GM12878 (cell line): ENCODE measurements at regions of chr4 and their contacts with region 1.

Region 1: GRCh38 chr4:105594099-105594993 is 41.9 kb downstream of the ARHGEF38 start:
- DNase-seq: peak; percentile 59
- ATAC-seq: peak; percentile 95
- H3K4me3 ChIP-seq: peak overlapping the region; percentile 47
- H3K27ac ChIP-seq: peak overlapping the region; percentile 77
- H3K4me1 ChIP-seq: no peaks in the 10 kb centered on the region; the same call in 1 of the 2 replicates
- H3K27me3 ChIP-seq: no peaks in the 10 kb centered on the region
- CTCF ChIP-seq: no peak
- EP300 ChIP-seq: peak; percentile 85 to 92
- POLR2A ChIP-seq: no peak
- RAD21 ChIP-seq: no peak

Region 2: DNA sequence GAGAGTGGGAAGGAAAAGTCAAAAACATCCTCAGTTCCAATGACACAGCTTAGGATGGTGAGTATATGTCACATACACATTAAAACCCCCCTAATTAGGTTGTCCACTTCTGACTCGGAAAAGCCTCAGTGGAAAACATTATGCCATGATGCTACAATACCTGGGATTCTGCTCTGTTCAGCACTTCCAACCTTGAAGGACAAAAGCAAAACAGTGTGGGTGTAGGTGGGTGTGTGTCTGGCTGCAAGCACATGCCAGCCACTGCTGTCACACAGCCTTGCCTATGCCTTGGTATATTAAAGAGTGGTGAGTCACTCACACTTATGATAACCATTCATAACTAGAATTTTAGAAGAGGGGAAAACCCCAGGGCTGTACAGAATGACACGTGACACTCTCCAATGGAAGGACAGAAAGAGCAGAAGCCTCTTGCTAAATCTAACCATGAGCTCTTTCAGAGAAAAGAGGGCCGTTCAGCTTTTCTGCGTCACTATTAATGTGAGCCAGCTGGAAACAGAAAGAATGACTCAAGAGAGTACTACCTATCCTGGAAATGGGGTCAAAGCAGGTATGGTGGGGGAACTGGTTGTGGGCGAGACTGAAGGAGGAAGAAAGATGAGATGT is 288.1 kb before region 1 on chr4:
- CTCF ChIA-PET with region 1: no interaction called
- POLR2A ChIA-PET with region 1: no interaction called
- RAD21 ChIA-PET with region 1: no interaction called
- SMC1A ChIA-PET with region 1: no interaction called
- in situ Hi-C with region 1: no loop called
- intact Hi-C with region 1: loop called (anchors 5 kb)
- DNase-seq: peak; percentile 91
- ATAC-seq: peak; percentile 91
- H3K4me3 ChIP-seq: peak overlapping the region; percentile 24; the same call in 1 of the 2 replicates
- H3K27ac ChIP-seq: peak overlapping the region; percentile 86
- H3K4me1 ChIP-seq: peaks cover 14% of the 10 kb centered on the region
- H3K27me3 ChIP-seq: no peaks in the 10 kb centered on the region
- CTCF ChIP-seq: no peak
- EP300 ChIP-seq: peak; percentile 75 to 77; a peak in 3 of 4 replicates
- POLR2A ChIP-seq: peak; percentile 43; the same call in 1 of the 2 replicates
- RAD21 ChIP-seq: 0 out of 2 replicates have a peak, but pooled peaks have one; percentile 3

Region 3: GRCh38 chr4:105509291-105509690 is 85.1 kb before region 1 on chr4:
- CTCF ChIA-PET with region 1: no interaction called
- POLR2A ChIA-PET with region 1: interaction called, 4 read pairs
- RAD21 ChIA-PET with region 1: no interaction called
- SMC1A ChIA-PET with region 1: no interaction called
- in situ Hi-C with region 1: no loop called
- intact Hi-C with region 1: loop called (anchors 1 kb)
- DNase-seq: peak; percentile 20
- ATAC-seq: peak; percentile 96
- H3K4me3 ChIP-seq: no peak overlapping the region
- H3K27ac ChIP-seq: no peak overlapping the region
- H3K4me1 ChIP-seq: peaks cover 8% of the 10 kb centered on the region; the same call in 1 of the 2 replicates
- H3K27me3 ChIP-seq: no peaks in the 10 kb centered on the region
- CTCF ChIP-seq: no peak
- EP300 ChIP-seq: peak; percentile 18 to 78; a peak in 2 of 4 replicates
- POLR2A ChIP-seq: no peak
- RAD21 ChIP-seq: no peak

Region 4: GRCh38 chr4:105605493-105605892 is 11.1 kb after region 1 on chr4:
- CTCF ChIA-PET with region 1: interaction called, 8 read pairs
- POLR2A ChIA-PET with region 1: no interaction called
- RAD21 ChIA-PET with region 1: interaction called, 8 read pairs
- SMC1A ChIA-PET with region 1: interaction called, 13 read pairs
- in situ Hi-C with region 1: no loop called
- intact Hi-C with region 1: no loop called
- DNase-seq: no peak
- ATAC-seq: peak; percentile 71
- H3K4me3 ChIP-seq: no peak overlapping the region
- H3K27ac ChIP-seq: no peak overlapping the region
- H3K4me1 ChIP-seq: no peaks in the 10 kb centered on the region
- H3K27me3 ChIP-seq: no peaks in the 10 kb centered on the region
- CTCF ChIP-seq: no peak
- EP300 ChIP-seq: 0 out of 4 replicates have a peak, but pooled peaks of 1 of the 2 experiments have one; percentile 58
- POLR2A ChIP-seq: no peak
- RAD21 ChIP-seq: no peak

Region 5: DNA sequence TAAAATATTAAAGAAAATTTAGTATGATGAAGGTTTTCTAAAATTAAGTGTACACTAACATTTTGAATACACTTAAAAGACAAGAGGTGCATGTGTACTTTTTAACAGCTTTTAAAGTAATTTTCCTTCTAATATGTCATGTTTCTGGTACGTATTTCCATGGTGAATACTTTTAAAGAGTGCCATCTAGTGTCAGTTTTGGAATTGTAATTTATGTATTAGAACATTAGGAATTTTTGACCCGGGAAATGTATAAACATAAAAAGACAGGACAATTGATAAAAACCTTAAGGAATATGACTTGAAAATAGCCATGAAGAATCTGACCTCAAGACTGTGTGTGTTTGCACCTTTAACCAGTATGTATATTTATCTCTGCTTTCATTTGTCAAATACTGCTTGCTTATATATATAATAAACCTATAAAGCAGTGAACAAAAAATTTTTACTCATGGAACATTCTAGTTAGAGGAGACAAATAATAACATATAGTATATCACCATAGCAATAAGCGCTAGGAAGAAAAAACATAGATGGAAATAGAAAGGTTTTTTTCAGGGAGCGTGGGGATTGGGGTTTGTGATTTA is 121.4 kb after region 1 on chr4:
- CTCF ChIA-PET with region 1: interaction called, 3 read pairs
- POLR2A ChIA-PET with region 1: no interaction called
- RAD21 ChIA-PET with region 1: interaction called, 4 read pairs
- SMC1A ChIA-PET with region 1: interaction called, 6 read pairs
- in situ Hi-C with region 1: no loop called
- intact Hi-C with region 1: loop called (anchors 2 kb)
- DNase-seq: no peak
- ATAC-seq: 0 out of 3 replicates have a peak, but pooled peaks have one; percentile 10
- H3K4me3 ChIP-seq: no peak overlapping the region
- H3K27ac ChIP-seq: no peak overlapping the region
- H3K4me1 ChIP-seq: peaks cover 3% of the 10 kb centered on the region; the same call in 1 of the 2 replicates
- H3K27me3 ChIP-seq: no peaks in the 10 kb centered on the region
- CTCF ChIP-seq: peak; percentile 17 to 48 (median 36); a peak in 2 of 6 replicates
- EP300 ChIP-seq: no peak
- POLR2A ChIP-seq: no peak
- RAD21 ChIP-seq: peak; percentile 49

Region 6: DNA sequence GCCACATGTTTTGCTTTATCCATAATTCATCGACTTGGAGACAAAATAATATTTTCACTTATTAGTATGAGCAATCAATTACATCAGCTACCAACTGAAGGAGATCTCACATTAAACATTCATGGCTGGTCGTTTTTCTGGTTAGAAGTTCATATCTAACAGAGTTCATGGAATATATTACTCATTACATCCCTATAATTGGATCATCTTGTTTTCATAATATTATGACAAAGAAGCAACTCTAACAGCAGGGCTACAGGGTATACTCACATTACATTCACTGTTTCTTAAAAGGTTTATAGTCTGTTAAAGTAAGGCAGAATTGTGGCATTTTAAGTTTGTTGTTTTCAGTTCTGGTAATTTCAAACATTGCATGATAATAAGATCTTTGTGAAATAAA is 147.2 kb after region 1 on chr4:
- CTCF ChIA-PET with region 1: no interaction called
- POLR2A ChIA-PET with region 1: no interaction called
- RAD21 ChIA-PET with region 1: no interaction called
- SMC1A ChIA-PET with region 1: no interaction called
- in situ Hi-C with region 1: no loop called
- intact Hi-C with region 1: no loop called
- DNase-seq: no peak
- ATAC-seq: no peak
- H3K4me3 ChIP-seq: no peak overlapping the region
- H3K27ac ChIP-seq: no peak overlapping the region
- H3K4me1 ChIP-seq: no peaks in the 10 kb centered on the region
- H3K27me3 ChIP-seq: no peaks in the 10 kb centered on the region
- CTCF ChIP-seq: no peak
- EP300 ChIP-seq: no peak
- POLR2A ChIP-seq: no peak
- RAD21 ChIP-seq: no peak

Region 7: GRCh38 chr4:105808750-105809041 is 214.3 kb after region 1 on chr4:
- CTCF ChIA-PET with region 1: no interaction called
- POLR2A ChIA-PET with region 1: no interaction called
- RAD21 ChIA-PET with region 1: no interaction called
- SMC1A ChIA-PET with region 1: no interaction called
- in situ Hi-C with region 1: no loop called
- intact Hi-C with region 1: no loop called
- DNase-seq: no peak
- ATAC-seq: no peak
- H3K4me3 ChIP-seq: no peak overlapping the region
- H3K27ac ChIP-seq: no peak overlapping the region
- H3K4me1 ChIP-seq: no peaks in the 10 kb centered on the region
- H3K27me3 ChIP-seq: no peaks in the 10 kb centered on the region
- CTCF ChIP-seq: no peak
- EP300 ChIP-seq: no peak
- POLR2A ChIP-seq: no peak
- RAD21 ChIP-seq: no peak